Activated naive CD4-positive, alpha-beta T cell treated with anti-CD3 and anti-CD28 coated beads, Interleukin-2, amount 10 ng/mL, durations not matched to agents 7 days and 5 days (primary cell): ENCODE measurements at regions of chr19 and their contacts with region 1.

Region 1: GRCh38 chr19:44723952-44724319 is 24.6 kb upstream of the BCL3 start:
- DNase-seq: peak; percentile 86
- H3K4me3 Mint-ChIP-seq: no peak overlapping the region
- H3K27ac Mint-ChIP-seq: peak overlapping the region; percentile 21
- H3K4me1 Mint-ChIP-seq: peaks cover 56% of the 10 kb centered on the region
- H3K27me3 Mint-ChIP-seq: peaks cover 35% of the 10 kb centered on the region

Region 2: GRCh38 chr19:44689056-44689895 is 34.7 kb before region 1 on chr19:
- CTCF ChIA-PET with region 1: interaction called, 56 read pairs
- DNase-seq: peak; percentile 87
- H3K4me3 Mint-ChIP-seq: no peak overlapping the region
- H3K27ac Mint-ChIP-seq: no peak overlapping the region
- H3K4me1 Mint-ChIP-seq: peaks cover 40% of the 10 kb centered on the region
- H3K27me3 Mint-ChIP-seq: peaks cover 46% of the 10 kb centered on the region

Region 3: GRCh38 chr19:44752816-44753618 is 29.1 kb after region 1 on chr19:
- CTCF ChIA-PET with region 1: interaction called, 19 read pairs
- DNase-seq: peak; percentile 98
- H3K4me3 Mint-ChIP-seq: peak overlapping the region; percentile 91
- H3K27ac Mint-ChIP-seq: peak overlapping the region; percentile 97
- H3K4me1 Mint-ChIP-seq: peaks cover 79% of the 10 kb centered on the region
- H3K27me3 Mint-ChIP-seq: peaks cover 4% of the 10 kb centered on the region

Region 4: GRCh38 chr19:44792281-44792680 is 68.3 kb after region 1 on chr19:
- CTCF ChIA-PET with region 1: interaction called, 10 read pairs
- DNase-seq: no peak
- H3K4me3 Mint-ChIP-seq: no peak overlapping the region
- H3K27ac Mint-ChIP-seq: no peak overlapping the region
- H3K4me1 Mint-ChIP-seq: peaks cover 18% of the 10 kb centered on the region
- H3K27me3 Mint-ChIP-seq: peaks cover 9% of the 10 kb centered on the region

Region 5: GRCh38 chr19:44857837-44858236 is 133.9 kb after region 1 on chr19:
- CTCF ChIA-PET with region 1: no interaction called
- DNase-seq: no peak
- H3K4me3 Mint-ChIP-seq: no peak overlapping the region
- H3K27ac Mint-ChIP-seq: no peak overlapping the region
- H3K4me1 Mint-ChIP-seq: peaks cover 3% of the 10 kb centered on the region
- H3K27me3 Mint-ChIP-seq: peaks cover 12% of the 10 kb centered on the region